Activated CD4-positive, alpha-beta memory T cell treated with anti-CD3 and anti-CD28 coated beads for 36 hours (primary cell): ENCODE measurements at regions of chr6 and their contacts with region 1.

Region 1: GRCh38 chr6:106085984-106086813 is at the start of gene PRDM1:
- DNase-seq: peak; percentile 89
- H3K4me3 Mint-ChIP-seq: peak within 1 kb of the TSS; percentile 90
- H3K27ac Mint-ChIP-seq: peak within 1 kb of the TSS; percentile 94
- H3K4me1 Mint-ChIP-seq: peaks cover 73% of the 10 kb centered on the region
- H3K27me3 Mint-ChIP-seq: peaks cover 2% of the 10 kb centered on the region
- total RNA-seq, gene PRDM1: 70.9 to 78.9 TPM

Region 2: GRCh38 chr6:105452924-105453756 is 633.1 kb before region 1 on chr6:
- CTCF ChIA-PET with region 1: no interaction called
- POLR2A ChIA-PET with region 1: no interaction called
- intact Hi-C with region 1: loop called (anchors 10 kb)
- DNase-seq: peak; percentile 47
- H3K4me3 Mint-ChIP-seq: peak overlapping the region; percentile 20
- H3K27ac Mint-ChIP-seq: peak overlapping the region; percentile 52
- H3K4me1 Mint-ChIP-seq: peaks cover 22% of the 10 kb centered on the region
- H3K27me3 Mint-ChIP-seq: peaks cover 15% of the 10 kb centered on the region

Region 3: DNA sequence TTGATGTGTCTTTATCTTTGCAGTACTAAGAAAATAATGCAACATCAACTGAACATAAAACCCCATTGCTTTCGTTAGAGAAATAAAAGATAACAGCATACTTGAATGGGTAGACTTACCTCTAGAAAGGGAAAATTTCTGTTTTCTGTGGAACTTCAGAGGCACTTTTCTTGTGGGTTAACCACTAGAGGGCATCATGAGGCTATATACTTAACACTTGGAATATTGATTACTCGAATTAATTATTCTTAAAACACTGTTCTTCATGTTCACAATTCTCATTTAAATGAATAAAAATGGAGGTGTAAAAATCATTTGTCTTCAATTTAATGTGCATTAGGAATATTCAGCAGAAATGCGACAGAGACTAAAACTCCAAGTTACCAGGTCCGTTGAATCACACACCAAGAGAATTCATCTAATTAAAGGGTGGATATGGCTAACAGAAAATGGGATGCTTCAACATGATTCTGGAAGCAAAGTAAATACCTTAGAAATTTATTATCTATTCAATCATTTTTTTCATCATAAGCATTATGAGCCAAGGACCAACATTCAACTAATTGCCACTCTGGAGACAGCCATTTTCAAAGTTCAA is 352.5 kb before region 1 on chr6:
- CTCF ChIA-PET with region 1: interaction called, 3 read pairs
- POLR2A ChIA-PET with region 1: no interaction called
- intact Hi-C with region 1: loop called (anchors 5 kb)
- DNase-seq: no peak
- H3K4me3 Mint-ChIP-seq: no peak overlapping the region
- H3K27ac Mint-ChIP-seq: no peak overlapping the region
- H3K4me1 Mint-ChIP-seq: no peaks in the 10 kb centered on the region
- H3K27me3 Mint-ChIP-seq: no peaks in the 10 kb centered on the region

Region 4: DNA sequence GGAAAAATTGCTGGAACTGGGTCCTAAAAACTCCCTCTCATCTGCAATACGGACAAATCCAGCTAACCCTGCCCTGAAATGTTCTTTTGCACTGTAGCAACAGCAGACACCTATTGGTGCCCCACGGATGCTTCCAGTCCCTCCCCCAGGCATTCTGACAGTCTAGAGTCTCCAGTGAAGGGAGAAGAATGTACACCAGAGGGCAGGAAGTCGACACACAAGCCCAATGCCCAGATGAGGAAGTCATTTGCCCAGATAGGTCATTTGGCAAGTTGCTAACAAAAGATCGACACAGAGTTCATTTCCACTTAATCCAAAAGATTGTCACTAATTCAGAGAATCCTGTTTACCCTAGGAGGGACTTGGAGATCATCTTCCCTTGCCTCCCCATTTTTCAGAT is 293.1 kb before region 1 on chr6:
- CTCF ChIA-PET with region 1: interaction called, 4 read pairs
- POLR2A ChIA-PET with region 1: no interaction called
- intact Hi-C with region 1: loop called (anchors 5 kb)
- DNase-seq: peak; percentile 30
- H3K4me3 Mint-ChIP-seq: no peak overlapping the region
- H3K27ac Mint-ChIP-seq: no peak overlapping the region
- H3K4me1 Mint-ChIP-seq: peaks cover 54% of the 10 kb centered on the region
- H3K27me3 Mint-ChIP-seq: peaks cover 4% of the 10 kb centered on the region

Region 5: DNA sequence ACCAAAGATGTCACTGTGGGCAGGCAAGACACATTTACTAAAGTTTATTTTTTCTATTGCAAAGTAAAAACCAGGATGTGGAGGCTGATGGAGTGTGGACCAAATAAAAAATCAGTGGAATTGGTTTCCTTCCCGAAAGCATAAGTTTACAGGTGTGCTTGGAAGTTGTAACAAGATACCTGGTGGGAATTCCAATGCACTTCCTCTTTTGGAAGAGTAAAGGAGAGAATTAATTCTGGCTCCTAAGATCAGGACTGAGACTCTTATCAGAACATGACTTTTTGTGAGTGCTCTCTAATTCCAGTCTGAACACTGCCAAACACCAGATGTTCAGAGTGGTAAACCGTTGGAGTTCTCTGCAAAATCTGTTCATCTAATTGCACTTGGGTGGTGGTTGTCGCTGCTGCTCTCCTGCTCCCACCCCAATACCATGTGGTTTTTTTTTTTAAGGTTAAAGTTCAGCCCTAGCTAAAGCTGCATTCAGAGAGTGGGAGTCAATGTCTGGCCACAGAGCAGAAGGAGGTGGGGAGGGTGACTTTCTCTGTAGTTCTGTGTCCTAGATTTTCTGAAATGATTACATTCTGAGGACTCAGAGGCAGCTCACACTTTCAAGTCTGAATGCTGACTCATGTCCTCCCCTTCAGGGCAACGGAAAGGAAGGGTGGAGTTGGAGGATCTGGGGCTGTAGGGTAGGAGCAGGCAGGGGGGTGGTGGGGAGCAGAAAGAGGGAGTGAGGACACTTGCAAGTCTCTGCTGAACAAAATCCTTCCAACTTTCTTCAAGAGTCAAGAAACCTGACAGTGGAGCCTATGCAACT is 275.9 kb before region 1 on chr6:
- CTCF ChIA-PET with region 1: no interaction called
- POLR2A ChIA-PET with region 1: interaction called, 4 read pairs
- intact Hi-C with region 1: loop called (anchors 5 kb)
- DNase-seq: peak; percentile 82
- H3K4me3 Mint-ChIP-seq: no peak overlapping the region
- H3K27ac Mint-ChIP-seq: peak overlapping the region; percentile 53
- H3K4me1 Mint-ChIP-seq: peaks cover 42% of the 10 kb centered on the region
- H3K27me3 Mint-ChIP-seq: peaks cover 10% of the 10 kb centered on the region

Region 6: DNA sequence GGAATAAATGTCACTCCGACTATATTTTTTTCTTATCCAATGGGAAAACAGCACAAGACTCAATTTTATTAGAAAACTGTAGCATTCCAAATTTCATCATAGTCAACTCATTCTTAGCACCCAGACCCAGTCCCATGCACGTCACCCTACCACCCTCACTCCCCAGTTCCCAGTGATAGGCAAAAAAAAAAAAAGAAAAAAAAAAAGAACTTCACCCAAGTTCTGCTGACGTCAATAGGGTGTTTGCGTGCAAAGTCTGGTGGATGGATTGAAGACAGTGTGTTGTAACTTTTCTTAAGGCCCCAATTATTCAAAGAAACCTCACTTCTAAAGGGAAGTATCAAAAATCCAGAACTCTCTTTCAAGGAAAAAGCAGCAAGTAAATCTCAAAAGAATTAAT is 214.0 kb before region 1 on chr6:
- CTCF ChIA-PET with region 1: interaction called, 3 read pairs
- POLR2A ChIA-PET with region 1: interaction called, 3 read pairs
- intact Hi-C with region 1: loop called (anchors 5 kb)
- DNase-seq: no peak
- H3K4me3 Mint-ChIP-seq: no peak overlapping the region
- H3K27ac Mint-ChIP-seq: no peak overlapping the region
- H3K4me1 Mint-ChIP-seq: peaks cover 12% of the 10 kb centered on the region
- H3K27me3 Mint-ChIP-seq: peaks cover 26% of the 10 kb centered on the region

Region 7: GRCh38 chr6:106273087-106273486 is 186.9 kb after region 1 on chr6:
- CTCF ChIA-PET with region 1: no interaction called
- POLR2A ChIA-PET with region 1: no interaction called
- intact Hi-C with region 1: no loop called
- DNase-seq: no peak
- H3K4me3 Mint-ChIP-seq: no peak overlapping the region
- H3K27ac Mint-ChIP-seq: peak overlapping the region; percentile 57
- H3K4me1 Mint-ChIP-seq: peaks cover 15% of the 10 kb centered on the region
- H3K27me3 Mint-ChIP-seq: no peaks in the 10 kb centered on the region